SK-N-SH (cell line): ENCODE measurements at regions of chr9 and their contacts with region 1.

Region 1: DNA sequence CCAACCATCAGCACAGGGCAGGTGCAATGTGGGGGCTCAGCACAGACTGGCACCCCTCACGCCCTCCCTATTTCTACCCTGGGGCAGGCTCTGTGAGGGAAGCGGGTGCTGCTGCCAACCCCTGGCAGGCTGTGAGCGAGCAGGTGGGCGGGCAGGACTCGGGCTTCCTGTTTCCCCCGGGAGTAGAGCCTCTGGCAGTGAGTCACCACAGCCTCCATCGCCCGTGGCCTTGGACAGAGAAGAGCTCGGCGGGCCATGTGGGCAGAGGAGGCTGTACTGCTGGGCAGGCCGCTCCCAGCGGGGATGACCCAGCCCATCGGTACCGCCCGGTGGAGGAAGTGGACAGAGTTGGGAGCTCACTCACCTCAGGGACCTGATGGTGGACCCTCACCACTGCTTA is 16.6 kb downstream of the KCNT1 start:
- DNase-seq: no peak
- H3K4me3 ChIP-seq: no peak overlapping the region
- H3K27ac ChIP-seq: no peak overlapping the region
- H3K4me1 ChIP-seq: peaks cover 0 to 14% of the 10 kb centered on the region in 2 experiments; a peak in 1 of 4 replicates
- H3K27me3 ChIP-seq: no peaks in the 10 kb centered on the region
- CTCF ChIP-seq: no peak
- EP300 ChIP-seq: no peak
- RAD21 ChIP-seq: no peak

Region 2: GRCh38 chr9:135701959-135702721 is 16.5 kb before region 1 on chr9 and contains the start of gene KCNT1:
- CTCF ChIA-PET with region 1: interaction called, 32 read pairs
- POLR2A ChIA-PET with region 1: no interaction called
- DNase-seq: peak; percentile 99
- H3K4me3 ChIP-seq: peak within 1 kb of the TSS in 1 of 2 experiments; percentile 30; a peak in 2 of 4 replicates
- H3K27ac ChIP-seq: no peak within 1 kb of the TSS; a peak in 1 of 4 replicates
- H3K4me1 ChIP-seq: peaks cover 0 to 30% of the 10 kb centered on the region in 2 experiments; a peak in 1 of 4 replicates
- H3K27me3 ChIP-seq: no peaks in the 10 kb centered on the region
- CTCF ChIP-seq: peak; percentile 66
- EP300 ChIP-seq: no peak
- RAD21 ChIP-seq: peak; percentile 68
- polyA plus RNA-seq, gene KCNT1: 0.08 and 0.26 TPM in 2 replicates

Region 3: GRCh38 chr9:135770203-135770535 is 51.6 kb after region 1 on chr9:
- CTCF ChIA-PET with region 1: no interaction called
- POLR2A ChIA-PET with region 1: no interaction called
- DNase-seq: no peak
- H3K4me3 ChIP-seq: no peak overlapping the region
- H3K27ac ChIP-seq: no peak overlapping the region
- H3K4me1 ChIP-seq: no peaks in the 10 kb centered on the region
- H3K27me3 ChIP-seq: no peaks in the 10 kb centered on the region
- CTCF ChIP-seq: no peak
- EP300 ChIP-seq: no peak
- RAD21 ChIP-seq: no peak